Caco-2 (cell line): ENCODE measurements at regions of chr19 and their contacts with region 1.

Region 1: DNA sequence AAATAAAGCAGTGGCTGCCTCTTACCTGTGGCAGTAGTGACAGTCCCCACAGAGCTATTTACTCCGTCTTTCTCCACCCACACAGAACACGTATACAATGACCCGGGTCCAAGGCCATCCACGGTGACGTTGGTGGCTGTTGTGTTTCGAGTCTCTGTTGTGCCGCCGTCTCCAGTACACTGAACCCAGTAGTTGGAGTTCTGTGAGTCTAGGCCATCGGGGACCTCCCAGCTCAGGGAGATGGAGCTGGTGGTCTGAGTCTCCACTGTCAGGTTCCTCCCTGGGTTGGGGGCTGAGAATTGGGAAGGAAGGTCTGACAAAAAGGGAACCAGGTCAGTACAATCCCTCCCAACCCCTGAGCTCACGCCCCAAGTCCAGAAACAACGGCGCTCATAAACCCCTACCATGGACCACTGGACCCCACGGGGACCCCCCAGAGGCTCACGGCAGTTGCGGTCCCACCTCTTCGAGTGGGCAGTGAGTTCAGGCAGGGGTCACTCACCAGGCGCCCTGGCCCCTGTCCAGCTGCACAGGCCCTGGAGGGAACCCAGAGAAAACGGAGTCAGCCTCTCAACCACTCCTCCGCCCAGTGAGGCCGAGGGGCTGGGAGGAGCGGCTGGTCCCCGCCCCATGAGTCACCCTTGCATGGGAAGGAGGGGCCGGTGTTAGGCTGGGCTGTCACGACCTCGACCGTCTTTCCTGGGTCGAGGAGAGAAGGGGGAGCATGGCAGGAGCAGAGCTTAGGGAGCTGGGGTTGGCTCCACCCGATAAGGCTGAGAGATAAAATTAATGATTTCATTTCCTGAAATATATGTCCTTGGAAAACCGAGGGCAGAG is 2.4 kb downstream of the PTPRH start:
- DNase-seq: peak; percentile 88 to 91
- H3K4me3 ChIP-seq: peak overlapping the region; percentile 8; the same call in 1 of the 2 replicates
- H3K4me3 Mint-ChIP-seq: peak overlapping the region; percentile 68
- H3K27ac Mint-ChIP-seq: peak overlapping the region; percentile 92
- H3K4me1 ChIP-seq: peaks cover 26% of the 10 kb centered on the region
- H3K4me1 Mint-ChIP-seq: peaks cover 19% of the 10 kb centered on the region
- H3K27me3 ChIP-seq: no peaks in the 10 kb centered on the region
- H3K27me3 Mint-ChIP-seq: no peaks in the 10 kb centered on the region
- CTCF ChIP-seq: no peak

Region 2: GRCh38 chr19:55173714-55174409 is 33.0 kb before region 1 on chr19:
- CTCF ChIA-PET with region 1: no interaction called
- POLR2A ChIA-PET with region 1: no interaction called
- intact Hi-C with region 1: loop called (anchors 5 kb)
- DNase-seq: peak; percentile 83 to 87
- H3K4me3 ChIP-seq: peak overlapping the region; percentile 37
- H3K4me3 Mint-ChIP-seq: peak overlapping the region; percentile 76
- H3K27ac Mint-ChIP-seq: no peak overlapping the region
- H3K4me1 ChIP-seq: peaks cover 1% of the 10 kb centered on the region; the same call in 1 of the 2 replicates
- H3K4me1 Mint-ChIP-seq: peaks cover 14% of the 10 kb centered on the region
- H3K27me3 ChIP-seq: no peaks in the 10 kb centered on the region
- H3K27me3 Mint-ChIP-seq: peaks cover 37% of the 10 kb centered on the region
- CTCF ChIP-seq: no peak